Pancreas (tissue), 10 donors: ENCODE measurements at regions of chr16 and their contacts with region 1.

Region 1: DNA sequence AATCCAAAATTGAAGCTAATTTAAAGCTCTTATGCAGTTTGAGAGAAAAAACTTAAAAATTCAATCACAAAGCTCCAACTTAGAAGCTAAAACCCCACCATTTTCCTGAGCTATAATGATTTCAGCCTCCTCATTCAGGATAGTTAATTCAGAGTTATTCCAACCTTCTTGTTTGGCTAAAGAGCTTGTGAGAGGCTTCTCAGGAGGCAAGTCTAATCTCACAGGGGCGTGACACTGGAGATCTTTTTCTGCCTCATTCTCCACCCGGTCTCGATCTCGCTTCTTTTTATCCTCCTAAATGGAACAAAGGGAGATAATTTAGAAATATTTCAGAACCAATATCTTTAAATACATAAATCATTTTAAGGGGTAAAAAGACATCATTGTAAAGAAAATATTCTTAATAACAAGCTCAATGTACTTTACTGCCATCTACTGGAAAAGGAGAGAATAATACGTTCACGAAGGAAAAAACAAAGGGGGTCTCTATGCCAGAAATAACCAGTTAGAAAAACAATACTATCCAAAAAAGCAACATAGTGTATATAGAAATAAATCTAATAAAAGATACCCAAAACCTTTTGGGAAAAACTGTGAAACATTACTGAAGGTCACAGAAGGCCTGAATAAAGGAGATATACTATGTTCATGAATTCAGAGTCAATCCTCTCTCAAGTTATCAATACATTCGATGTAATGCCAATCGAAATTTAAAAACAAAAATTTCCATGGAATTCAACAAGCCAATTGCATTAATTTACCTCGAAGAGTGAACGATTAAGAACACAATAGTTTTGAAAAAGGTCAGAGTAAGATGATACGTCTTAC is 13.9 kb downstream of the BRD7 start:
- DNase-seq: no peak
- ATAC-seq: peak in 1 of 4 donors; percentile 38
- H3K4me3 ChIP-seq: no peak overlapping the region
- H3K27ac ChIP-seq: no peak overlapping the region
- H3K4me1 ChIP-seq: peaks cover under 1 to 3% (median 2%) of the 10 kb centered on the region in 3 donors
- H3K27me3 ChIP-seq: no peaks in the 10 kb centered on the region
- CTCF ChIP-seq: peak; percentile 14 to 50 (median 32)

Region 2: GRCh38 chr16:50210266-50211038 is 144.4 kb before region 1 on chr16:
- intact Hi-C with region 1: loop called in 1 of 3 experiments (anchors 5 kb)
- DNase-seq: peak; percentile 53 to 82 (median 70)
- ATAC-seq: peak; percentile 76 to 95 (median 94)
- H3K4me3 ChIP-seq: no peak overlapping the region
- H3K27ac ChIP-seq: peak overlapping the region in 1 of 4 donors; percentile 3
- H3K4me1 ChIP-seq: peaks cover 8 to 17% (median 15%) of the 10 kb centered on the region in 3 donors
- H3K27me3 ChIP-seq: no peaks in the 10 kb centered on the region
- CTCF ChIP-seq: peak; percentile 35 to 47 (median 37)

Region 3: GRCh38 chr16:50627419-50627818 is 272.6 kb after region 1 on chr16:
- intact Hi-C with region 1: no loop called
- DNase-seq: no peak
- ATAC-seq: peak in 3 of 4 donors; percentile 43 to 70 (median 44)
- H3K4me3 ChIP-seq: no peak overlapping the region
- H3K27ac ChIP-seq: no peak overlapping the region
- H3K4me1 ChIP-seq: no peaks in the 10 kb centered on the region
- H3K27me3 ChIP-seq: no peaks in the 10 kb centered on the region
- CTCF ChIP-seq: no peak